ENCODE measurements at regions of chr12 and their contacts with region 1.

Region 1: GRCh38 chr12:12837025-12837872 is 24.1 kb downstream of the DDX47 start:
- DNase-seq: no peak
- ATAC-seq: peak; percentile 77
- H3K4me3 ChIP-seq: peak overlapping the region; percentile 8
- H3K27ac ChIP-seq: peak overlapping the region; percentile 24
- H3K4me1 ChIP-seq: peaks cover 9% of the 10 kb centered on the region
- H3K27me3 ChIP-seq: no peaks in the 10 kb centered on the region
- CTCF ChIP-seq: peak; percentile 54

Region 2: DNA sequence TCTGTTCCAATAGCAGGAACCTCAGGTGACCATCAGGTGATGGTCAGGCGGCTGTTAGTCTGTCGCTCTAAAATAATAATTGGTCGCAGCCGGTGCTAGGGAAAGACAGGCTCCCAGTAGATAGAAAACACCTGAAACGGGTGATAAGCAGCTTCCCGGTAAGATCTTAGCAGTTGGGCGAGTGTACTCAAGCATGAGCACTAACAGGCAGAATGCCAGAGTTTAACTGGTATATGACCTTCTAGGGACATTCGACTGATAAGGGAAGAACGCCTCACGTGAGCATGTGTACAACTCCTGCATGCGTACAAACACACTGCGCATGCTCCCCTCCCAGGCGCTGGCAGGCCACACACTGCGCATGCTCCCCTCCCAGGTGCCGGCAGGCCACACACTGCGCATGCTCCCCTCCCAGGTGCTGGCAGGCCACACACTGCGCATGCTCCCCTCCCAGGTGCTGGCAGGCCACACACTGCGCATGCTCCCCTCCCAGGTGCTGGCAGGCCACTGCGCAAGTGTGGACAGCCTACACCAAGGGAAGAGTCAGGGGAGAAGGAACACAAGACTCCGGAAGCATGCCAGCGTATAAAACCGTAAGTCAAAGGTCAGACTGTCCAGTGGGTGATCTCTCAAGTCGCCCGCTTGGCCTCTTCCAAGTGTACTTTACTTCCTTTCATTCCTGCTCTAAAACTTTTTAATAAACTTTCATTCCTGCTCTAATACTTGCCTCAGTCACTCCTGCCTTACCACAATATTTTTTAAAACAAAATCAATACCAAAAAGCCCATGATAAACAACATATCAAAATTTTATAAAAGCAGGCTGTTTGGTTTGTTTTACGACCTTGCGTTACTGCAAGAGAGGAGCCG is 90.2 kb after region 1 on chr12:
- intact Hi-C with region 1: no loop called
- DNase-seq: peak; percentile 89
- ATAC-seq: peak; percentile 87
- H3K4me3 ChIP-seq: peak overlapping the region; percentile 57
- H3K27ac ChIP-seq: peak overlapping the region; percentile 36
- H3K4me1 ChIP-seq: no peaks in the 10 kb centered on the region
- H3K27me3 ChIP-seq: no peaks in the 10 kb centered on the region
- CTCF ChIP-seq: no peak

Region 3: DNA sequence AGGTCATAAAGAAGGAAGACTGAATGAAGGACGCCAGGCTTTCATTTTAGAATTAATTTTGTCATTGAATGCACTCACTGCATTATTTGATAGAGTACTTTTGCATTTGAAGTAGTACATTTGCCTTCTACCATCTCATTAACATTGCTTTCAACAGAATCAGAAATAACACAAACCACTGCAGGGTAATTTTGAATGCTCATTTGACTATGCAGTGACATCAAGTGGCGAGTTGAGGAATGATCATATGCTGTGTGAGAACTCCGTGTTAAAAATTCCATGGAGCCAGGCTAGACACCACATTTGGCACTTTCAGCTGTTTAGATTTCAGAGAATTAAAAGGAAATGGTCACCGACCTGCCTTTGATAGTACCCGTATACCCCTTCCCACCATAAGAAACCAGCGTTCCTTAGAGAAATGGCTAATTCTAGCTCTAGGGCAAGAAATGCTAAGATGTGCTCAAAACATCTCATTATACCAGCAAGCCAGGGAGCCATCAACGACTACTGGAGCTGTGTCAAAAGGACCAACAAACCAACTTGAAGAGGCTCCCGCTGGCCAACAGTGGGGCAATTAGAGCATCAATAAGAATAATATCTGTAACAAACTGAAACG is 146.3 kb after region 1 on chr12:
- intact Hi-C with region 1: loop called (anchors 5 kb)
- DNase-seq: no peak
- ATAC-seq: peak; percentile 67
- H3K4me3 ChIP-seq: no peak overlapping the region
- H3K27ac ChIP-seq: no peak overlapping the region
- H3K4me1 ChIP-seq: no peaks in the 10 kb centered on the region
- H3K27me3 ChIP-seq: no peaks in the 10 kb centered on the region
- CTCF ChIP-seq: peak; percentile 60

Measured in upper lobe of right lung (tissue), 1 donor.